GM18951 (cell line): ENCODE measurements at regions of chr4 and their contacts with region 1.

Region 1: DNA sequence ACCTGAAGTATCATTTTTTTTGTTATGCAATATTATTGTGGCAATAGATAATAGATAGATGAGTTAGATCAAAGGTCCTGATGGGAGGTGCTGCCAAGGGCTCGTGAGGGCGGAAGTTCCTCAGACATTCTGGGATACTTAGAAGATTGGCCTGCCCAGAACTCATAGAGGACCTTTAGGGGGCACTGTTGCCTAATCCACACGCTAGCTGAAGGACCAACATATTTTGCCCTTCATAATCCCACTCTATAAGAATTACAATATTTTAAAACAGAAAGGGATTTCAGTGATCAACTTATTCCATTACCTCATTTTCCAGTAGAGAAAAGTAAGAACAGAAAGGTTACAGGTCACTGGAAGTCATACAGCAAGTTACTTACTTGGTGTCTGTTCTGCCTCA is 22.9 kb upstream of the COX7B2 start:
- POLR2A ChIP-seq: no peak

Region 2: DNA sequence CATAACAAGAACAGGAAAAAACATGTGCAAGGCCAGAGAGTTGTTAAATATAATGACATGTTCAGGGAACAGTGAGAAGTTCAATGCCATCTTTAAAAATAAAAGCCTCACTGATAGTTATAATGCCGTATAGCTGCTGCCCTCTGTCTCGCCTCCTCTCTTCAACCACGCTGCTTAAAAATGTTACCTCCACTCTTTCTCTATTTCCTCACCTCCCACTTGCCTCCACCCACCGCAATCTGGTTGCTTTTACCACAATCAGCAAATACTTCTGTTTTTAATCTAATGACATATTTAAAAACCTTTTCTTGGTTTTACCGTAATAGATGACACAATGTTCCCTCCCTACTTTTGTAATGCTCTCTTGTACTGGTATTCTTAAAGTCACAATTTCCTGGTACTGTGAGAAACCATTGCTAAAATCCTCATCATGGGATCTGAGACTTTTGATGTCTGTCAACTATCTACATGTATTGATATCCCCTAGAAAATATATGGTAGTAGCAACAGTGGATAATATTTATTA is 608.0 kb before region 1 on chr4:
- in situ Hi-C with region 1: no loop called
- POLR2A ChIP-seq: no peak

Region 3: DNA sequence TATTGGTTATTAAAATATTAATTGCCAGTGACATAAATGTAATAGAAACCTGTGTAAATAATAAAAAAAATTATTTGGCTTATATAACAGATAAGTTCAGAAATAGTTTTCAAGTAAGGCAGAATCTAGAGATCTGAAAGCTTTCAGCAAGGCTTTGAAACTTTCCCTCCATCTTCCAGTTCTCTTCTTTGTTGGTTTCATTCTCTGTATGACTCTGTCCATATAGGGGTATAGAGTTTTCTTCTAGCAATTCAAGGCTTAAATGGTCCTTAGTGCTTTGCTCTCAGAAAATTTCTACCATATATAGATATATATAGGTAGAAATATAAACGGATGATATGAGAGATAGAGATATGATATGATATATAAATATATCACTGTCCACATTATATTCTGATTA is 381.5 kb before region 1 on chr4:
- in situ Hi-C with region 1: no loop called
- POLR2A ChIP-seq: no peak

Region 4: DNA sequence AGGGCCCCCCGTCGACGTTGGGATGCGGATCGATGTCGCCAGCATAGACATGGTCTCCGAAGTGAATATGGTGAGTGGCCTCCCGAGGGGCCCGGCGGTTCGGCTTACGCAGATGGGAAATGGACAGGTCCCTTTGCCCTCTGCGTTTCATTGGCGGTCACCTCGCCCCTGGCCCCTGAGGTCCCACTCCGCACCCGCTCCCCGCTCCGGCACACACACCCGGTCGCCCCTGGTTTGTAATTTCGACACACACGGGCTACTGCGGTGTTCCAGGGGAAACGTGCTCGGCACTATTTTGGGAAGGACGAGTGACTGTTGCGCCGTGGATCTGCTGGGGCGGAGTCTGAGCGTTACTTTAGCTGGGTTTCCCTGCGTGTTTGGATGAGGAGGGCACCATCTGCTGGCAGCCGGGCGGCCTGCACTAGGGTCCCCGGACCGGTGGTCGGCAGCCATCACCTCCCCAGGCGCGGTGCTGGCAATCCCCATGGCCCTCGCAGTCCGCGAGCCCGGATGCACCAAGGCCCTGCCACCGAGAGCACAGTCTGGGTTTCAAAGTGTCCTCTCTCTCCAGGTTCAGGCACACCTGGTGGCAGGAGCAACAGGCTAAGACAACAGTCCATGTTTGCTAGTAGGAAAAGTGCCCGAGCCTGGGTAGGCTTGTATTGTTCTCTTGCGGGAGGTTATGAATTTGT is 100.6 kb after region 1 on chr4:
- in situ Hi-C with region 1: loop called (anchors 25 kb)
- POLR2A ChIP-seq: no peak

Region 5: DNA sequence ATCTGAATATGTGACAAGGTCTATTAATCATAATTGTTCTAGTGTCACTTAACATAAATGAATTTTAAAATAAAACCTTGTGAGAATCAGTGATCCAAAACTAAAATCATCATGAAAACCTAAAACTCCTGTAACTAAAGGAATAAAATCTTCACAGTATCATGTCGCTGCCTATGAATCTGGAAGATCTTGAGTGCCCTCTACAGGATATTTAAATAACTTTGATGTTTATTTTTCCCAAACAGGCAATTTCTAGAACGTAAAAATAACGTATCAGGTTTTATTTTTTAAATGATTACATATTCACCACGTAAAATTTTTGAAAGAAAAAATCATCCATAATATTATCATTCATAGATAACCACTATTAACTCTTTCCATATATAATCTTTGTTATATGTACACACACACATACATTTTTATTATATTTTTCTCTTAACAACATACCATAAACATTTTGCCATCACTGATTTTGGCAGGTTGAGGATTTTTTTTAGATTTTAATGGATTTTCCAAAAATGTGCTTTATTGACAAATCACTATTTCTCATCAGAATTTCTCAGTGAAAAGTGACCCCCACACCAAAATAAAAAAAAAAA is 451.9 kb after region 1 on chr4:
- in situ Hi-C with region 1: loop called (anchors 10 kb)
- POLR2A ChIP-seq: no peak